ENCODE measurements at regions of chr15 and their contacts with region 1.

Region 1: DNA sequence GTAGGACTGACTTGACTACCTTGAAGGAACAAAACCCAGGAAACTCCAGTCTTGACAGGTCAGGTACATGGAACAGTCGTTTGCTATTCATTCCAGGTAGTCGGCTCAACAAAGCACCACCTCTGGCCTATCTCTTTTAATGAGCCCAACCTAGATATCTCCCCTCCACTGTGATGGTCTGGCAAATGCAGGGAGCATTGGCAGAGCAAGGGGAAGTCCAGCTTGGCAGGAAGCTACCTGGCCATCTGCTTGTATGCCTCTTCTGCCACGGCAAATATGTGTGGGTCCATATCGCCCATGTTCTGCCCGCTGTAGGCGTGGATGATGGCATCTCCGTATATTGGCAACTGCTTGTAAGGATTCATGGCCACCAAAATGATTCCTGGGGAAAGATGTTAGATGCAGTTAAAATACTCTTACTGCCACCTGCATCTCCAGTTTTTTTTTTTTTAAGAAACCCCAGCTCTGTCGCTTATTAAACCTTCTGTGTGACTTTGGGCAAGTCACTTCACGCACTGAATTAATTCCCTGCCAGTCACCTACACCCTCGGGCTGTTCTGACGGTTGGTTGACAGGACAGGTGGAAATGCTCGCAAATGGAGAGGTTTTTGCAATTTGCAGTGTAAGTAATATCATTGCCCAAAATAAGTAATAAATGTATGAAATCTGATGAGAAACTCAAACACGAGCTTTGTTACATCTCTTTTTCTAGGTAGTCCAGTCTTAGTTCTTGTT is 16.8 kb downstream of the MYO5C start:
- DNase-seq: no peak
- ATAC-seq: no peak
- H3K4me3 ChIP-seq: no peak overlapping the region
- H3K27ac ChIP-seq: no peak overlapping the region
- H3K4me1 ChIP-seq: no peaks in the 10 kb centered on the region
- H3K27me3 ChIP-seq: no peaks in the 10 kb centered on the region
- CTCF ChIP-seq: no peak

Region 2: DNA sequence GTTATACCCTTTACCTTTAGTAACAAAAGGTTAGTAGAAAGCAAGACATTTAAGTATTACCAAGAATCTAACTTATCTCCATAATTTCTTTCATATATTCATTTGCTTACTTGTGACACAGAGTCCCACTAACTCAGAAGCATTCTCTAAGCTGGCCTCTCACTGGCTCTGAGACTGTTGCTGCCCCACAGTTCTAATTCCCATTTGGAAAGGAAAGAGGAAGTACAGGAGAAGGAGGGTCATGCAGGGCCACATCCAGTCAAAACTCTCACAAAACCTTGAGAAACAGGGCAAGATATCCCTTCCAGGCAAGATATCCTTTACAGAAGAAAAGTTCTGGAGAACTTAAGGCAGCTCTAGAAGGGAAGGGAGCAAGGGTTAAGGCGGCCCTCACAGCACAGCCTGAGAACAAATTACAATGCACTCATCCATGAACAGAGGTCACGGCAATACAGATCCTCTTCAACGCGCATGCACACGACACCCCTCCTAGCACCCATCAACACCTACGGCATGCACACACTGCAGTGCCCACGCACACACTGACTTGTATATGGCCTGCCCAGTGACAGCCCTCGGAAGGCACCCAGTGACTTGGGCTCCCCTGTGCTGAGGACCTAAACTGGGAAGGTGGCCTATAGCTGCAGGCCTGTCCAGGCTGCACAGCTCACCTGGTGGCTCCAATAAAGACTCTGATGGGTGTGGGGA is 29.8 kb after region 1 on chr15:
- intact Hi-C with region 1: loop called in 1 of 2 experiments (anchors 2 kb)
- DNase-seq: no peak
- ATAC-seq: no peak
- H3K4me3 ChIP-seq: no peak overlapping the region
- H3K27ac ChIP-seq: no peak overlapping the region
- H3K4me1 ChIP-seq: no peaks in the 10 kb centered on the region
- H3K27me3 ChIP-seq: no peaks in the 10 kb centered on the region
- CTCF ChIP-seq: no peak

Region 3: DNA sequence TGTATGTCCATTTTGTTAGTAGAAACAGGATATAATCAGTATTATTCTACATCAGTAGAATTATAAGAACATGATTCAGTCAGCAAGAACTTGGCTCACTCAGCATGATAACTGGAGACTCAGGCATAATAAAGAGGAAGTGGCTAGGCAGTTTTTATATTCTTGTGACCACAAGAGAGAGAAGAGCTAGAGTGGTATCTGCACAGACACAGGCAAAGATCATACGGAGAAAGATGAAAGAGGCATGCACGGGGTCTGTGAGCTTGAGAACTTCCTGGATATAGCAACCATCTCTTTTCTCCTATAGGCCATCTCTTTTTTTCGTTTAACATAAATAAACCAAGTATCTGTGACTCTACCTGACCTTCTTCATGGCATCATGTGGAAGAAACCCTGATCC is 203.1 kb after region 1 on chr15:
- intact Hi-C with region 1: no loop called
- DNase-seq: no peak
- ATAC-seq: peak; percentile 70 to 91 (median 81)
- H3K4me3 ChIP-seq: no peak overlapping the region
- H3K27ac ChIP-seq: peak overlapping the region; percentile 71
- H3K4me1 ChIP-seq: peaks cover 43% of the 10 kb centered on the region
- H3K27me3 ChIP-seq: no peaks in the 10 kb centered on the region
- CTCF ChIP-seq: no peak

Measured in psoas muscle (tissue), 8 donors.